ENCODE measurements at regions of chrX and their contacts with region 1.

Region 1: GRCh38 chrX:130916636-130917422 is 13.8 kb upstream of the ENOX2 start:
- DNase-seq: no peak
- ATAC-seq: no peak

Region 2: DNA sequence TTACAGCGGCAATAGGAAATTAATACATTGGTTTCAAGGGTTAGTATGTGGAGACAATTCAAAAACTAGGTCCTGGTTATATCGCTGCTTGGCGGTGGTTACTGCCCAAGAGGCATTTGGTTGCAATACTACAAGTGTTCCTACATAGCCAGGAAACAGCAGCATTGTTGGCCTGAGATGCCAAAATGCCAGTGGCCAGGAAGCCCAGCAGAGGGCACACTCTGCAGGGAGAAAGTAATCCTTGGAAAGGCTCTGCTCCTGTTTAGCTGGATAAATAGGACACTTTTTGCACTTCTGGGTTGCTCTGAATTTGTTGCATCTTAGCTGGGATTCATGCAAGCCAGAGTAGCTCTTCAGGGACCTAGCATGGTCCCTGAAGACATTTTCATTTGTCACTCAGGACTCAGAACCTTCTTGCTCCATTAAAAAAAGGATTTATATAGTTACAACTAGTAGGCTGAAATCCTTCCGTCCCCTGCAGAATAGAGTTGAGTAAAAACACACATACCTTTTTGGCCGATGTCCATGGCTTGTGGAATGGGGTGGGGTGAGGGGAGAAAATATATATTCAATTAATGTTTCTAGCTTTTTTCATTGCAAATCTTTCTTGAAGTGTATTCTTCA is 523.3 kb before region 1 on chrX:
- intact Hi-C with region 1: loop called (anchors 10 kb)
- DNase-seq: peak; percentile 40
- ATAC-seq: no peak

Region 3: GRCh38 chrX:130539721-130540321 is 377.0 kb before region 1 on chrX:
- intact Hi-C with region 1: loop called (anchors 5 kb)
- DNase-seq: peak; percentile 46
- ATAC-seq: peak; percentile 59

Region 4: GRCh38 chrX:130984782-130985181 is 68.0 kb after region 1 on chrX:
- intact Hi-C with region 1: no loop called
- DNase-seq: no peak
- ATAC-seq: no peak

Region 5: DNA sequence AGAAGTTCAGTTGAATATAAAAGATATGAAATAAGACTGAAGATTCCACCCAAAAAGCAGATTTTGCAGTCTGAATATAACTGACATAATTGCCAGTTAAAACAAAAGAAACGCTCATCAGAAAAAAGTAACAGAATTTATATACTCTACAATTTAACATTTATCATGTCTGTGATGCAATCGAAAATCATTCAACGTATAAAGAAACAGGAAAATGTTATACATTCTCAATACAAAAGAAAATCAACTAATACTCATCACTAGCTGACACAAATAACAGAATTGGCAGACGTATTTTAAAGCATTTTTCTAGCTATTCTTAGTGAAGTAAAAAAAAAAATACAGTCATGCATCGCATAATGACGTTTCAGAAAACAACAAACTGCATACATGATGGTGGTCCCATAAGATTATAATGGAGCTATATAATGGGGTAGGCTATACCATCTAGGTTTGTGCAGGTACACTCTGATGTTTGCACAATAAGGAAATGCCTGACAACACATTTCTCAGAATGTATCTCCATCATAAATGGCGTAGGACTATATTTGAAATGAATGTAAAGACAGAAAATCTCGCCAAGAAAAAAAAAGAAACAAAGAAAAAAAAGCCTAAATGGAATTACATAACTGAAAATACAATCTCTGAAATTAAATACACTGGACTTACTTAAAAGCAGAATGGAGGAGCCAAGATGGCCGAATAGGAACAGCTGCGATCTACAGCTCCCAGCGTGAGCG is 661.3 kb after region 1 on chrX:
- intact Hi-C with region 1: no loop called
- DNase-seq: no peak
- ATAC-seq: no peak

Measured in Right ventricle myocardium superior (tissue), 1 donor.